RWPE1 (cell line): ENCODE measurements at regions of chr15 and their contacts with region 1.

Region 1: GRCh38 chr15:89760303-89761008 is 9.4 kb upstream of the MESP1 start:
- DNase-seq: peak; percentile 85
- H3K27ac ChIP-seq: peak overlapping the region; percentile 68
- CTCF ChIP-seq: peak; percentile 99

Region 2: DNA sequence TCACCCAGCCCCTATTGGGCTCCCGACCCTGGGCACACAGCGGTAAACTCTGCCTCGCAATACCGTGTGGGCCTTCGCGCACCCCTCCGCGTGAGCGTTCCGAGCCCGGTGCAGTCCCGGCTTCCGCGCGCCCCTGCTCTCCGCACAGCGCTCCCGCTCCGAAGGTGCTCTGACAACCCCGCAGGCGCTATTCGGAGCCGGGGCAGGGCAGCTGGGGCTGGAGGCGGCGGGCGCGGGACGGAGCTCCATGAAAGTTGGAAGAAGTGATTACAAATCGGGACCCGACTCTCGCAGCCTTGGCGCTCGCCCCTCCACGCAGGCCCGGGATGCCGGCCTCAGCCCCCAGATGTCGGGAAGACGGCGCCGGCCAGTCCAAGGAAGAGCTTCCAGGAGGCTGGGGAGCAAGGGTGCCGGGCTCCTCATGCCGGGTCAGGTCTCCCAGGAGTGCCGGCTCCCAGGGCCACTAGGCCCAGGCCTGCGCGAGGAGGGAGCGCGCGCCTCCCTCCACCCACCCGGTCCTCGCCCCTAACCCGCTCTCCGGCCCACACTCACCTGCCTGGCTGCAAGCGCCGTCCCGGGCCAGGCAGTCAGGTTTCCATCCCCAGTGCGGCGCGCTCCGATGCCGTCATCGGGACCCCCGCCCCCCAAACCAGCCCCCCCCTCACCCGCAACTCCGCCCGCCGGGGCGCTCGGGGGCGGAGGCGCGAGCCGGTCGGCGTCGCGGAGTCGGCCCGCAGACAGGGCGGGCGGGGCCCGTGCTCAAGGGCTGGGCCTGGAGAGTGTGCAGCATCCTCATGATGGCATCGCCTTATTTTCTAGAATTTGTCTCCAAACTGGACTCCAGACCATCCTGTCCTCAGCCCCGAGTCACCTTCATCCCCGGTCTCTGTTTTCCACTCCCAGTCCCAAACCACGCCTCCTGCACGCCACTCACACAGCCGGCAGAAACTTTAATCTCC is 105.3 kb before region 1 on chr15 and contains the start of gene KIF7:
- CTCF ChIA-PET with region 1: no interaction called
- POLR2A ChIA-PET with region 1: no interaction called
- DNase-seq: peak; percentile 54
- H3K27ac ChIP-seq: peak within 1 kb of the TSS; percentile 37
- CTCF ChIP-seq: no peak

Region 3: DNA sequence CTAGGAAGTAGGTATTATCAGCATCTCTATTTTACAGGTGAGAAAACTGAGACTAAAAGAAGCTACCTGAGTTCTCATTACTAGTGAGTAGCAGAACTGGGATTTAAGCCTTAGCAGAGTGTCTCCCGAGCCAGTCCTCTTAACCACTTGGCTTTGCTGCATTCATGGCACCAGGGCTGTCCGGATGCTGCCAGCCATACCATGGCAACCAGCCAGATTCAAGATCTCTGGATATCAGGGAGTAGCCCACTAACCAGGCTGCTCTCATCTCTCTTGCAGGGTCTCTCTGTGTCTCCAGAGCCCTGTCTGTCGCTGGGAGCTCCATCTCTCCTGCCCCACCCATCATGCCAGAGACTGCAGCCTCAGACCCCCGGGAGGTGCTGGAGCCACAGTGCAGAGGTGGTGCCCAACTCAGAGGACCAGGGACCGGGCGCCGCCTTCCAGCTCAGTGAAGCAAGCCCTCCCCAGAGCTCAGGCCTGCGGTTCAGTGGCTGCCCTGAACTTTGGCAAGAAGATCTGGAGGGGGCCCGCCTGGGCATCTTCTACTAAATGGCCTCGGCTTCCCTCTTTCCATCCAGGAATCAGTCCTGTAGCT is 17.4 kb after region 1 on chr15:
- CTCF ChIA-PET with region 1: interaction called, 10 read pairs
- POLR2A ChIA-PET with region 1: no interaction called
- DNase-seq: no peak
- H3K27ac ChIP-seq: peak overlapping the region; percentile 23
- CTCF ChIP-seq: no peak

Region 4: DNA sequence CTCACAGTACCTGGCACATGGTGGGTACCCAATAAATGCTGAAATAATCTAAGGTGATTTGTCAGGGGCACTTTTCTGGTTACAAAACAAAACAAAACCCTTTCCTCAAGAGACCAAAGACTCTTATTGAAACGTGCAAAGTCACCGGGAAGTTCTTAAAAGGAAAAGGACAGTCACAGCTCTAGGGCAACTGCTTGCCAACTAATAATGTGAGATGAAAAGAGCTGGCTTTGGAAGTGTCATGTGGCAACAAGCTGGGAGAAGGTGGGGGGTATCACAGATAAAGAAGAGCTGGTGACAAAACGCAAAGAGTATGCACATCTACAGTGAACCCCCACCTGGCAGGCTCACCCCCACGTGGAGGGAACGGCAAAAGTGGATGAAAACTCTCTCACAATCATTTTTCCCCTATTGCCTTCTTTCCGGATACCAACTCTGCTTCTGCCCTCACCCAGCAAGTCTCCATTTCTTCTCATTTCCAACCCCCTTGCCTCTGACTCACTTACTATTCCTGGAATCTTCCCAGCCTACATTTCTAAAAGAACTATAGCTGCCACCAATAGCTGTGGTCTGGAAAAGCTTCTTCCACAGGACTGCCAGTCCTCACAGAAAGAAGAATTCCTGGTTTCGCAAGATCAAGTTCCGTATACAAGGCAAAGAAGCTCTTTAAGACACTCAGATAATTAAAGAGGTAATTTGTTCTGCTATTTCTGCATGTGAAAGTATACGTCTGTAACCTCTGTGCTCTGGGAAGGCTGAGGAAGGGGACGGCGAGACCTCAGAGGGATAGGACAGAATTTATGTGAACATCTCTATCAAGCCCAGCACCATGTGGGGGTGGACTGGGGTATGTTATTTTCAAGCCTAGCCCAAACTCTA is 76.0 kb after region 1 on chr15:
- CTCF ChIA-PET with region 1: interaction called, 12 read pairs
- POLR2A ChIA-PET with region 1: no interaction called
- DNase-seq: peak; percentile 95
- H3K27ac ChIP-seq: peak overlapping the region; percentile 82
- CTCF ChIP-seq: no peak

Region 5: GRCh38 chr15:89874926-89875564 is 114.6 kb after region 1 on chr15:
- CTCF ChIA-PET with region 1: interaction called, 86 read pairs
- POLR2A ChIA-PET with region 1: interaction called, 3 read pairs
- DNase-seq: peak; percentile 73
- H3K27ac ChIP-seq: no peak overlapping the region
- CTCF ChIP-seq: peak; percentile 99

Region 6: DNA sequence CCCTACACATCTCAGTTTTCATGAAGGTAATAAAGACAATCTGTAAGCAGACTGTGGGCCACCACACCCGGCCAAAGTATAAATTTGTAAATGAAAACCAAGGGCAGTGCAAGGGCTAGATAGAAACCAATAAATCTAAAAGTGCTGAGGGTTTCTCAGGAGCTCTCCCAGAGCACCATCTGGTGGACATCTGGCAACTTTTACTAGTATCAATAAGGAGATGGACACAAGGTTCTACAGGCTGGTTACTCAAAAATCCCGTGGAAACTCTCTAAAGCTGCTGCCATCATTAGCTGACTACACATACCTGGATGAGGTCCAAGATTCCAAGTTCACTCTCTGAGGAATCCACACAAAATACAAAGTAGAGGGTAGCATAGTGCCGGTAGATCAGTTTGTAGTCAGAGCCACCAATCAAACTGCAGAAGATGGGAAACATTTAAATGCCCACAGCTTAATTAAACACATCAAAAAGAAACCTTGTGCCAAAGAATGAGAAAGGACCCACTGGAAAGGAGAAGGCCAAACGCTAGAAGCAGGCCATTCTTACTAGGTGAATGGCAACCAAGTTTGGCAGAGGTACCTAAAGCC is 127.9 kb after region 1 on chr15:
- CTCF ChIA-PET with region 1: interaction called, 16 read pairs
- POLR2A ChIA-PET with region 1: no interaction called
- DNase-seq: peak; percentile 30
- H3K27ac ChIP-seq: no peak overlapping the region
- CTCF ChIP-seq: peak; percentile 45